ENCODE measurements at regions of chr1 and their contacts with region 1.

Region 1: GRCh38 chr1:24308365-24309015 is 10.7 kb upstream of the GRHL3 start:
- DNase-seq: peak; percentile 49
- ATAC-seq: peak; percentile 86
- H3K4me3 Mint-ChIP-seq: no peak overlapping the region
- H3K27ac Mint-ChIP-seq: 0 out of 2 replicates have a peak overlapping the region, but pooled peaks have one; percentile 29
- H3K4me1 Mint-ChIP-seq: peaks cover 64% of the 10 kb centered on the region
- H3K27me3 Mint-ChIP-seq: no peaks in the 10 kb centered on the region
- CTCF ChIP-seq: no peak

Region 2: DNA sequence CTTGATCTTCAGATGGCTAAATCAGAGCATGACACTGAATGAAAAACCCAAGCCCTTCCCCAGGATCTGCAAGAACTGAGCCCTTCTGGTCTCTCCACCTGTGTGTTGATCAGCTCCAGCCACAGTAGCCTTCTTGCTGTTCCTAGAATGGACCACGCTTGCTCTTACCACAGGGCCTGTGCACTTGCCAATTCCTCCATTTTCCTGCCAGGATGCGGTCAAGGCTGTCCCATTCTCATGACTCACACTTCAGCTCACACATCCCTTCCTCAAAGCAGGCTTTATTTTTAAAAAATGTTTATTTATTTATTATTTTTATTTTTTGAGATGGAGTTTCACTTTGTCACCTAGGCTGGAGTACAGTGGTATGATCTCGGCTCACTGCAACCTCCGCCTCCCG is 33.0 kb before region 1 on chr1:
- CTCF ChIA-PET with region 1: no interaction called
- POLR2A ChIA-PET with region 1: no interaction called
- DNase-seq: no peak
- ATAC-seq: no peak
- H3K4me3 Mint-ChIP-seq: no peak overlapping the region
- H3K27ac Mint-ChIP-seq: no peak overlapping the region
- H3K4me1 Mint-ChIP-seq: no peaks in the 10 kb centered on the region
- H3K27me3 Mint-ChIP-seq: no peaks in the 10 kb centered on the region
- CTCF ChIP-seq: no peak

Region 3: GRCh38 chr1:24289937-24290595 is 18.4 kb before region 1 on chr1:
- CTCF ChIA-PET with region 1: interaction called, 13 read pairs
- POLR2A ChIA-PET with region 1: no interaction called
- DNase-seq: no peak
- ATAC-seq: no peak
- H3K4me3 Mint-ChIP-seq: no peak overlapping the region
- H3K27ac Mint-ChIP-seq: no peak overlapping the region; the same call in 1 of the 2 replicates
- H3K4me1 Mint-ChIP-seq: peaks cover 37% of the 10 kb centered on the region
- H3K27me3 Mint-ChIP-seq: peaks cover 11% of the 10 kb centered on the region
- CTCF ChIP-seq: no peak

Region 4: DNA sequence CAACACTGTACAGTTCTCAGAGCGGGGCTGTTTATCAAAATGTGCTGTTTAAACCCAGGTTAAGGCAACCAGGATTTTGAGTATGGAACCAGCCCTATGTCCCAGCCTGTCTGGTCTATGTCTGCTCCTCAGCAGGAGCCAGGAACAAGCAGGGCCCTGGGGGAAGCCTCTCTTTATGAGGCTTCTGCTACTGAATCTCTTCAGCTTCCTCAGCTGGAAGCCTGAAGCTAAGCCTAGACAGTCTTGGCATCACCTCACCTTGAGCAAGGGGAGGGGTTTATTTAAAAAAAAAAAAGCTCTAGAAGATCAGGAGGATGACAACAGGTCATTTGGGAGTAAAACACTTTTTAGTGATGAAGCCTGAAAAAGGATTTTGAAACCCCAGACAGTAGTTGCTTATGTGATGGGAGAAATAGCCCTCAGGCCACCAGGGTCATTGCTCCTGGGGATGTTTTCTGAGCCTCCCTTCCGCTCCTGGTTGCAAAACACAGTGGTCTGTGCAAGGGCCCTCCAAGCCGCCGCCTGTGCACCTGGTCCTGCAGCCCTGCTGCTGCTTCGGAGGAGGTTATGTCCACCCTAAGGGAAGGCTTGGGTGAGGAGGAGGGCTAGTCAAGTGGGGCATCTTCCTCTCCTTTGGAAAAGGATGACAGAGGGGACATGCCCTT is 11.2 kb before region 1 on chr1:
- CTCF ChIA-PET with region 1: interaction called, 14 read pairs
- POLR2A ChIA-PET with region 1: no interaction called
- DNase-seq: no peak
- ATAC-seq: no peak
- H3K4me3 Mint-ChIP-seq: no peak overlapping the region
- H3K27ac Mint-ChIP-seq: no peak overlapping the region
- H3K4me1 Mint-ChIP-seq: peaks cover 34% of the 10 kb centered on the region
- H3K27me3 Mint-ChIP-seq: peaks cover 7% of the 10 kb centered on the region
- CTCF ChIP-seq: no peak

Region 5: DNA sequence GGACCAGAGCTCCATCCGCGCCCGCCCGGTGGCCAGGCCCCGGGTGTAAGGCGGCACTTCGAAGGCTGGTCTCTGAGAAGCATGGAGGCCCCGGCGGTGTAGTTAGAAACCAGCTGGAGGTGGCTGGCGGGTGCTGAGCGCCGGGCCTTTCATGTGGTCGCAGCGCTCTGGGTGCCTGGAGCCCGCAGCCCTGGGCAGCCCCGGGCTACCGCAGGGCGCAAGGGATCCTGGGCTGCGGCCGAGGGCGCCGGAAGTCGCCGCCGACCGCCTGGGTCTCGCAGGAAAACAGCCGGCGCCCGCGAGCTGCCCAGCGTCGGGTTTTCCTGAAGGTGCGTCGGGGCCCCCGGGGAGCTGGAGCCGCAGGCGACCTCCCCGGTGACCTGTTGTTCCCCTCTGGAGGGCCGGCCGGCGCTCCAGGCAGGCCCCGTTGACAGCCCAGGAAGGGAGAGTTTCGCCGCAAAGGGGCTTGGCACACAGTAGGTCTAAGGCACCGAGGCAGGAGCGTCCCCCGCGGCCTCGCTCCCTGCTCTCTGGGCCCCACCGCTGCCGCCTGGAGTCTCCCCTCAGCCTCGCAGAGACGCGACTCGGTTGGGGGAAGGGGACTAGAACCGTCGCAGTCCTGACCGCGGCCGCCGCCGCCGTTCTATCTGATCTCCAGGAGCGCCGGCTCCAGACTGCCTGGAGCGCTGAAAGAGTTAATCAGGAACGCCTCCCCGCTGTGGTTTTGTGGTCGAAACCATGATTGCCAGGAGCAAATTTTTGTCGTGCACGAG is 13.4 kb after region 1 on chr1:
- CTCF ChIA-PET with region 1: interaction called, 39 read pairs
- POLR2A ChIA-PET with region 1: interaction called, 7 read pairs
- DNase-seq: peak; percentile 65
- ATAC-seq: peak; percentile 25
- H3K4me3 Mint-ChIP-seq: peak overlapping the region; percentile 86
- H3K27ac Mint-ChIP-seq: no peak overlapping the region
- H3K4me1 Mint-ChIP-seq: peaks cover 51% of the 10 kb centered on the region
- H3K27me3 Mint-ChIP-seq: peaks cover 46% of the 10 kb centered on the region
- CTCF ChIP-seq: no peak

Region 6: GRCh38 chr1:24362982-24363614 is 54.6 kb after region 1 on chr1:
- CTCF ChIA-PET with region 1: no interaction called
- POLR2A ChIA-PET with region 1: no interaction called
- DNase-seq: no peak
- ATAC-seq: no peak
- H3K4me3 Mint-ChIP-seq: no peak overlapping the region
- H3K27ac Mint-ChIP-seq: no peak overlapping the region
- H3K4me1 Mint-ChIP-seq: peaks cover 3% of the 10 kb centered on the region; the same call in 1 of the 2 replicates
- H3K27me3 Mint-ChIP-seq: no peaks in the 10 kb centered on the region
- CTCF ChIP-seq: no peak

Measured in WTC11 (cell line).